ENCODE measurements at regions of chr2 and their contacts with region 1.

Region 1: GRCh38 chr2:224885836-224886547 is 156.3 kb downstream of the DOCK10 start:
- DNase-seq: peak; percentile 37
- ATAC-seq: peak; percentile 94
- H3K4me3 ChIP-seq: no peak overlapping the region
- H3K27ac ChIP-seq: peak overlapping the region; percentile 59
- H3K4me1 ChIP-seq: peaks cover 6% of the 10 kb centered on the region; the same call in 1 of the 2 replicates
- H3K27me3 ChIP-seq: no peaks in the 10 kb centered on the region
- CTCF ChIP-seq: no peak
- EP300 ChIP-seq: 0 out of 4 replicates have a peak, but pooled peaks of 1 of the 2 experiments have one; percentile 27
- POLR2A ChIP-seq: no peak
- RAD21 ChIP-seq: peak; percentile 30

Region 2: DNA sequence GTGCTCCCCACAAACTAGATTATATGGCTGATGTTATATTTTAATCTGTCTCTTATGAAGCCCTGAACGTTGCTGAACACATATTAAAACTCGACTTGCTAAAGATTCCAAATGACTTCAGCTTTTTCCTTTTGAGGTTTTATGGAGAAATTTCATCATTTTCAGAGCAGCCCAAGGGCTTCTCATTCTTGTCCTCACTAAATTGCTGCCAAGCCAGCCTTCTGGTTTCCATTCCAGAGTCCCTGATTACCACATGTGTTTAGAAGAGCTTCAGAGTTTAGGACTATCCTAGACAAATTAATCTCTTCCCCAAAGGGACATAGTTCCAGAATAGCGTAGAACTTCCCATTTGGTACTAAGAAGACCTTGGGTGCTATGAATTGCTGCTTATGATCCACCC is 92.0 kb before region 1 on chr2:
- CTCF ChIA-PET with region 1: no interaction called
- POLR2A ChIA-PET with region 1: no interaction called
- RAD21 ChIA-PET with region 1: no interaction called
- SMC1A ChIA-PET with region 1: no interaction called
- in situ Hi-C with region 1: no loop called
- intact Hi-C with region 1: no loop called
- DNase-seq: no peak
- ATAC-seq: no peak
- H3K4me3 ChIP-seq: no peak overlapping the region
- H3K27ac ChIP-seq: no peak overlapping the region
- H3K4me1 ChIP-seq: no peaks in the 10 kb centered on the region
- H3K27me3 ChIP-seq: no peaks in the 10 kb centered on the region
- CTCF ChIP-seq: no peak
- EP300 ChIP-seq: no peak
- POLR2A ChIP-seq: no peak
- RAD21 ChIP-seq: no peak

Region 3: GRCh38 chr2:224922142-224922727 is 36.2 kb after region 1 on chr2:
- CTCF ChIA-PET with region 1: interaction called, 3 read pairs
- POLR2A ChIA-PET with region 1: no interaction called
- RAD21 ChIA-PET with region 1: interaction called, 3 read pairs
- SMC1A ChIA-PET with region 1: interaction called, 4 read pairs
- in situ Hi-C with region 1: no loop called
- intact Hi-C with region 1: loop called (anchors 2 kb)
- DNase-seq: peak; percentile 71
- ATAC-seq: peak; percentile 78
- H3K4me3 ChIP-seq: no peak overlapping the region
- H3K27ac ChIP-seq: peak overlapping the region; percentile 47
- H3K4me1 ChIP-seq: peaks cover 45% of the 10 kb centered on the region
- H3K27me3 ChIP-seq: no peaks in the 10 kb centered on the region
- CTCF ChIP-seq: no peak
- EP300 ChIP-seq: peak; percentile 36 to 89; a peak in 3 of 4 replicates
- POLR2A ChIP-seq: no peak
- RAD21 ChIP-seq: no peak

Region 4: GRCh38 chr2:225112362-225113126 is 226.6 kb after region 1 on chr2:
- CTCF ChIA-PET with region 1: no interaction called
- POLR2A ChIA-PET with region 1: no interaction called
- RAD21 ChIA-PET with region 1: no interaction called
- SMC1A ChIA-PET with region 1: no interaction called
- in situ Hi-C with region 1: no loop called
- intact Hi-C with region 1: loop called (anchors 5 kb)
- DNase-seq: peak; percentile 13
- ATAC-seq: peak; percentile 86
- H3K4me3 ChIP-seq: no peak overlapping the region
- H3K27ac ChIP-seq: no peak overlapping the region
- H3K4me1 ChIP-seq: peaks cover 9% of the 10 kb centered on the region
- H3K27me3 ChIP-seq: no peaks in the 10 kb centered on the region
- CTCF ChIP-seq: no peak
- EP300 ChIP-seq: 0 out of 4 replicates have a peak, but pooled peaks of 1 of the 2 experiments have one; percentile 22
- POLR2A ChIP-seq: no peak
- RAD21 ChIP-seq: no peak

Region 5: GRCh38 chr2:225660262-225661131 is 774.5 kb after region 1 on chr2:
- CTCF ChIA-PET with region 1: no interaction called
- POLR2A ChIA-PET with region 1: no interaction called
- RAD21 ChIA-PET with region 1: no interaction called
- SMC1A ChIA-PET with region 1: no interaction called
- in situ Hi-C with region 1: no loop called
- intact Hi-C with region 1: loop called (anchors 5 kb)
- DNase-seq: peak; percentile 9
- ATAC-seq: peak; percentile 95
- H3K4me3 ChIP-seq: no peak overlapping the region
- H3K27ac ChIP-seq: no peak overlapping the region
- H3K4me1 ChIP-seq: no peaks in the 10 kb centered on the region
- H3K27me3 ChIP-seq: no peaks in the 10 kb centered on the region
- CTCF ChIP-seq: peak; percentile 85 to 90 (median 86)
- EP300 ChIP-seq: no peak
- POLR2A ChIP-seq: no peak
- RAD21 ChIP-seq: peak; percentile 94

Measured in GM12878 (cell line).